ENCODE measurements at regions of chr20 and their contacts with region 1.

Region 1: GRCh38 chr20:62143118-62143973 is at the starts of genes PSMA7 and SS18L1:
- DNase-seq: no peak
- H3K4me3 ChIP-seq: peak within 1 kb of the TSS; percentile 76
- CTCF ChIP-seq: no peak

Region 2: GRCh38 chr20:62129731-62130531 is 13.4 kb before region 1 on chr20:
- CTCF ChIA-PET with region 1: interaction called, 27 read pairs
- POLR2A ChIA-PET with region 1: interaction called, 3 read pairs
- DNase-seq: no peak
- H3K4me3 ChIP-seq: no peak overlapping the region
- CTCF ChIP-seq: no peak

Region 3: GRCh38 chr20:62156592-62157386 is 13.4 kb after region 1 on chr20:
- CTCF ChIA-PET with region 1: interaction called, 14 read pairs
- POLR2A ChIA-PET with region 1: no interaction called
- DNase-seq: no peak
- H3K4me3 ChIP-seq: no peak overlapping the region
- CTCF ChIP-seq: peak; percentile 85